Kidney (tissue), 22 donors: ENCODE measurements at regions of chr1 and their contacts with region 1.

Region 1: GRCh38 chr1:26274801-26275425 is 5.0 kb upstream of the SH3BGRL3 start:
- DNase-seq: no peak
- H3K4me3 ChIP-seq: no peak overlapping the region
- H3K27ac ChIP-seq: no peak overlapping the region
- H3K4me1 ChIP-seq: peaks cover 9 to 35% (median 32%) of the 10 kb centered on the region in 3 donors
- H3K27me3 ChIP-seq: no peaks in the 10 kb centered on the region
- CTCF ChIP-seq: no peak

Region 2: DNA sequence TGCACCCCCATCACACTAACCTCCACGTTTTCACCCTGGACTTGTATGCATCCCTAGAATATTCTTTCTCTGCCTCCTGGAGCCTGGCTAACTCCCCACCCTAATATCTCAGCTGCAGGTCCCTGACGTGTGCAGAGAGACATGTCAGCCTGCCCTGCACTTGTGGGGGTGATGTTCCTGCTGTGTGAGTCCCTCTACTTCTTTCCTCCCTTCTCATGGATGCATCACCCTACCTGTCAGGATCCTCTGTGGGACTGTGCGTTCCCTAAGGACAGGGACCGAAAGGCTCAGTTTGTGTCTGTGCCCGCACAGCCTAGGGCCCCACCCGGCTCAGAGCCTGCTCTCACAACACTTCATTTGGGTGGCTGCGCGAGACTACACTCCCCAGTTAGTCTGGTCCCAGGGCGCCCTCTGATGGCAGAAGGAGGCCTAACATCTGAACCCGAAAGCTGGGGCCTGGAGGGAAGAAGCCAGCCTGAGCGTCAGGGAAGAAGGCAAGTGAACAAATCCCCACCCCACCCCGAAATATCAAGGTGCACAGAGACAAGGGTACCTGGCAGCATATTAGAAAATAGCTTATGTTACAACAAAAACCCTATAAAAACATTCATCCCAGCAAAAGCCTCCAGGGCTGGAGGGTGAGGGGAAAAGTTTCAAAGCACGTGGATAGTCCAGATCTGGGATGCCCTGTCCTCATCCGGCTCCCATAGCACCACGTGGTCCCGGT is 46.6 kb after region 1 on chr1:
- intact Hi-C with region 1: loop called (anchors 5 kb)
- DNase-seq: peak; percentile 88 to 94 (median 90)
- H3K4me3 ChIP-seq: no peak overlapping the region
- H3K27ac ChIP-seq: no peak overlapping the region
- H3K4me1 ChIP-seq: peaks cover 0 to 3% (median 3%) of the 10 kb centered on the region in 3 donors
- H3K27me3 ChIP-seq: no peaks in the 10 kb centered on the region
- CTCF ChIP-seq: peak; percentile 90